Esophagus muscularis mucosa (tissue), 4 donors: ENCODE measurements at regions of chr6 and their contacts with region 1.

Region 1: DNA sequence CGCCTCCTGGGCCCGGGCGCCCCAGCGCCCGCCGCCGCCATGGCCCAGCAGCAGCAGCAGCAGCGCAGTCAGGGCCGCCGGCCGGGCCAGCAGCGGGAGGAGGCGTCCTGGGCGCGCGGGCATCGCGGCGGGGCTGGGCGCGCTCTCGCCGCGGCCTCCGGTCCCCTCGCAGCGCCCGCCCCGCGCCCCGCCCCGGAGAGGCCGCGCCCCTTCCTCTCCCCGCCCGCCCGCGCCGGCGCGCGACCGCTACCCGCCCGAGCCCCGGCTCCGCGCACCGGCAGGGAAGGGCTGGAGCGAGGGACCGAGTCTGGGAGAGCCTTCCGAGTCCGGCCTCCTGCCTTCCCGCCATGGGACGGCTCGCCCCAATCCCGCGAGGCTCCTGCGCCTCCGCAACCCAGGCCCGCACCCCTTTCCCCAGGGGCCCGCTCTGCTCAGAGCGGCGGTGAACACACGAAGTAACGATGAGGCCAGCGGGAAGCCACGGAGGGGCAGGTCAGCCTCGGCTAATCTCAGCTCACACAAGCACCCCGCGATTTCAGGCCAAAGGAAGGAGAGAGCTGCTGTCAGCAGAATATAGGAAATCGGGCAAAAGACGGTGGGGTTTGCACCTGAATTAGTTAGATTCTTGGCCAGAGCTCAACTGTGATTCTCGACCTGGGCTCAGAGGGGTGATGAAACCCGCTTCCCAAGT is at the start of gene TXNDC5:
- DNase-seq: no peak
- H3K4me3 ChIP-seq: peak within 1 kb of the TSS; percentile 77 to 97 (median 92)
- H3K27ac ChIP-seq: peak within 1 kb of the TSS; percentile 77 to 88 (median 86)
- H3K4me1 ChIP-seq: peaks cover 23 to 32% (median 25%) of the 10 kb centered on the region in 4 donors
- H3K27me3 ChIP-seq: no peaks in the 10 kb centered on the region
- CTCF ChIP-seq: no peak
- EP300 ChIP-seq: no peak
- POLR2A ChIP-seq: no peak
- total RNA-seq, gene TXNDC5: 61.5 to 116 (median 99.0) TPM

Region 2: DNA sequence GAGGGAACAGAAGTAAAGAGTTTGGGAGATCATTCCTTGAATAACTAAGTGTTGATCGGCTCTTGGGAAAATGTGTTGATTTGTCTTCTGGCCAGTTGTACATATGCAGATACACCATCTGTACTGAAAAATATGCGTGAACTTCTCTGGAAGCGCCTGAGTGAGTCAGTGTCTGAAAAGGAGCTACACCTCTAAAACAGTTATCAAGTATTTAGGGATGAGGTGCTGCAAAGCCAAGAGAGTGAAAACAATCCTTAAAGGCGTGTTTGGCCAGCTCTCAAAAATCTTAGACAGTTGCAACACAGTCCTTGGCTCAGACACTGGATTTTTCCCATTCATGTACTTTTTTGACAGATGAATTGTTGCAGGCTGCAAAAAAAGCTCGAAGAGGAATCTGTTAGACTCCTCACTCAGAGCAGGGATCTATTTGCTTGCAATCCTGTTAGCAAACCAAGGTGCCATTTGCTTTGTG is 123.6 kb before region 1 on chr6:
- intact Hi-C with region 1: loop called (anchors 5 kb)
- DNase-seq: no peak
- H3K4me3 ChIP-seq: peak overlapping the region in 2 of 4 donors; percentile 5 to 40
- H3K27ac ChIP-seq: peak overlapping the region; percentile 44 to 80 (median 72)
- H3K4me1 ChIP-seq: peaks cover 10 to 43% (median 39%) of the 10 kb centered on the region in 4 donors
- H3K27me3 ChIP-seq: no peaks in the 10 kb centered on the region
- CTCF ChIP-seq: no peak
- EP300 ChIP-seq: no peak
- POLR2A ChIP-seq: no peak

Region 3: GRCh38 chr6:7992002-7992815 is 81.4 kb after region 1 on chr6:
- intact Hi-C with region 1: loop called (anchors 5 kb)
- DNase-seq: no peak
- H3K4me3 ChIP-seq: peak overlapping the region in 1 of 4 donors; percentile 7
- H3K27ac ChIP-seq: peak overlapping the region in 3 of 4 donors; percentile 25 to 61 (median 37)
- H3K4me1 ChIP-seq: peaks cover 6 to 25% (median 20%) of the 10 kb centered on the region in 4 donors
- H3K27me3 ChIP-seq: no peaks in the 10 kb centered on the region
- CTCF ChIP-seq: peak in 2 of 3 experiments; percentile 44 to 49
- EP300 ChIP-seq: no peak
- POLR2A ChIP-seq: no peak

Region 4: GRCh38 chr6:8063761-8064637 is 153.2 kb after region 1 on chr6 and contains the start of gene BLOC1S5:
- intact Hi-C with region 1: loop called (anchors 5 kb)
- DNase-seq: peak; percentile 98
- H3K4me3 ChIP-seq: peak within 1 kb of the TSS; percentile 72 to 95 (median 88)
- H3K27ac ChIP-seq: peak within 1 kb of the TSS; percentile 81 to 93 (median 90)
- H3K4me1 ChIP-seq: peaks cover 3 to 25% (median 19%) of the 10 kb centered on the region in 4 donors
- H3K27me3 ChIP-seq: no peaks in the 10 kb centered on the region
- CTCF ChIP-seq: peak in 2 of 3 experiments; percentile 12 to 21
- EP300 ChIP-seq: no peak
- POLR2A ChIP-seq: peak; percentile 65
- total RNA-seq, gene BLOC1S5: 10.4 to 15.6 (median 11.2) TPM